Activated naive CD4-positive, alpha-beta T cell treated with anti-CD3 and anti-CD28 coated beads for 36 hours (primary cell): ENCODE measurements at regions of chr16 and their contacts with region 1.

Region 1: GRCh38 chr16:67806428-67807147 is at the starts of genes RANBP10 and TSNAXIP1:
- DNase-seq: peak; percentile 98
- H3K4me3 Mint-ChIP-seq: peak within 1 kb of the TSS; percentile 86
- H3K27ac Mint-ChIP-seq: peak within 1 kb of the TSS; percentile 81
- H3K4me1 Mint-ChIP-seq: peaks cover 36% of the 10 kb centered on the region
- H3K27me3 Mint-ChIP-seq: no peaks in the 10 kb centered on the region
- total RNA-seq, gene RANBP10: 12.4 to 16.1 TPM
- total RNA-seq, gene TSNAXIP1: 0.35 to 0.50 TPM

Region 2: GRCh38 chr16:67226804-67227557 is 579.6 kb before region 1 on chr16 and contains the start of gene TMEM208:
- CTCF ChIA-PET with region 1: no interaction called
- intact Hi-C with region 1: loop called (anchors 1 kb)
- DNase-seq: peak; percentile 99
- H3K4me3 Mint-ChIP-seq: peak within 1 kb of the TSS; percentile 100
- H3K27ac Mint-ChIP-seq: peak within 1 kb of the TSS; percentile 96
- H3K4me1 Mint-ChIP-seq: peaks cover 51% of the 10 kb centered on the region
- H3K27me3 Mint-ChIP-seq: no peaks in the 10 kb centered on the region
- total RNA-seq, gene TMEM208: 24.6 to 29.4 TPM

Region 3: GRCh38 chr16:67349172-67349571 is 457.4 kb before region 1 on chr16:
- CTCF ChIA-PET with region 1: no interaction called
- intact Hi-C with region 1: no loop called
- DNase-seq: no peak
- H3K4me3 Mint-ChIP-seq: no peak overlapping the region
- H3K27ac Mint-ChIP-seq: no peak overlapping the region
- H3K4me1 Mint-ChIP-seq: no peaks in the 10 kb centered on the region
- H3K27me3 Mint-ChIP-seq: no peaks in the 10 kb centered on the region

Region 4: GRCh38 chr16:67530013-67530939 is 276.3 kb before region 1 on chr16:
- CTCF ChIA-PET with region 1: no interaction called
- intact Hi-C with region 1: no loop called
- DNase-seq: peak; percentile 54
- H3K4me3 Mint-ChIP-seq: peak overlapping the region; percentile 68
- H3K27ac Mint-ChIP-seq: no peak overlapping the region
- H3K4me1 Mint-ChIP-seq: peaks cover 14% of the 10 kb centered on the region
- H3K27me3 Mint-ChIP-seq: peaks cover 20% of the 10 kb centered on the region

Region 5: DNA sequence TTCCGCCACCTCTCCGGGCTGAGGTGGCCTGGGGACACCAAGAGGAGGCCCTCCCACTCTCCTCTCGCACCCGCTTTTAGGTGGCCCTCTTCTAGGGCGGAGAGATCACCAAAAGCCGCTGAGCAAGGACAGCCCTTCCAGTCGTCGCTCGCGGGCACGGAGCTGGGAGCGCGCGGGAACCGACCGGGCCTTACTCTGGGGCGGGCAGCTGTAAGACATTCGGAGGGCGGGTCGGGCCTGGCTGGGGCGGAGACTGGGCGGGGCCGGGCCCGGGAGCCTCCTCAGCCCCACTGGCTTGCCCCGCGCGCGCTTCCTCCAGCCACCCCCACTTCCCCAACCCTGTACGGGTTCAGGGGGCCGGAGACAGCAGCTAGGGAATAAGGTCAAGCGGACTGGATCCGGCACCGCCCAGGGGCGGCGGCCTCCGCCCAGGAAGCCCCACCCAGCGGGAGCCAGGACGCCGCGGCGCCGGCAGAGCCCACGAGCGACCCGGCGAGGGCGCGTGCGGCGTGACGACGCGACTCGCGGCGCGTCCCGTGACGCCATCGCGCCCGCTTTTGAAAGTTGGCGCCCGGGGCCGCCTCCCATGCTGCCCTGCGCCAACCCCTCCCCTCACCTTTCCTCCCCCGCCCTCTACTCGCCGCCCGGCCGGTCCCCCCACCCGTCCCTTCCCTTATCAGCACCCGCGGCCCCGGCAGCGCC is 244.6 kb before region 1 on chr16:
- CTCF ChIA-PET with region 1: interaction called, 3 read pairs
- intact Hi-C with region 1: loop called (anchors 1 kb)
- DNase-seq: peak; percentile 98
- H3K4me3 Mint-ChIP-seq: peak overlapping the region; percentile 78
- H3K27ac Mint-ChIP-seq: peak overlapping the region; percentile 86
- H3K4me1 Mint-ChIP-seq: peaks cover 45% of the 10 kb centered on the region
- H3K27me3 Mint-ChIP-seq: no peaks in the 10 kb centered on the region

Region 6: GRCh38 chr16:67719048-67719777 is 87.4 kb before region 1 on chr16 and contains the start of gene GFOD2:
- CTCF ChIA-PET with region 1: no interaction called
- intact Hi-C with region 1: loop called (anchors 1 kb)
- DNase-seq: peak; percentile 99
- H3K4me3 Mint-ChIP-seq: peak within 1 kb of the TSS; percentile 96
- H3K27ac Mint-ChIP-seq: peak within 1 kb of the TSS; percentile 96
- H3K4me1 Mint-ChIP-seq: peaks cover 36% of the 10 kb centered on the region
- H3K27me3 Mint-ChIP-seq: no peaks in the 10 kb centered on the region
- total RNA-seq, gene GFOD2: 7.3 to 8.2 TPM

Region 7: GRCh38 chr16:67741118-67741517 is 65.5 kb before region 1 on chr16:
- CTCF ChIA-PET with region 1: no interaction called
- intact Hi-C with region 1: no loop called
- DNase-seq: no peak
- H3K4me3 Mint-ChIP-seq: no peak overlapping the region
- H3K27ac Mint-ChIP-seq: peak overlapping the region; percentile 7
- H3K4me1 Mint-ChIP-seq: no peaks in the 10 kb centered on the region
- H3K27me3 Mint-ChIP-seq: no peaks in the 10 kb centered on the region

Region 8: GRCh38 chr16:67892899-67893742 is 86.5 kb after region 1 on chr16 and contains the start of gene PSKH1:
- CTCF ChIA-PET with region 1: no interaction called
- intact Hi-C with region 1: loop called (anchors 1 kb)
- DNase-seq: peak; percentile 98
- H3K4me3 Mint-ChIP-seq: peak within 1 kb of the TSS; percentile 79
- H3K27ac Mint-ChIP-seq: peak within 1 kb of the TSS; percentile 82
- H3K4me1 Mint-ChIP-seq: peaks cover 39% of the 10 kb centered on the region
- H3K27me3 Mint-ChIP-seq: no peaks in the 10 kb centered on the region
- total RNA-seq, gene PSKH1: 7.1 to 8.0 TPM

Region 9: GRCh38 chr16:68237243-68238028 is 430.8 kb after region 1 on chr16:
- CTCF ChIA-PET with region 1: no interaction called
- intact Hi-C with region 1: loop called (anchors 10 kb)
- DNase-seq: peak; percentile 95
- H3K4me3 Mint-ChIP-seq: peak overlapping the region; percentile 93
- H3K27ac Mint-ChIP-seq: peak overlapping the region; percentile 79
- H3K4me1 Mint-ChIP-seq: peaks cover 30% of the 10 kb centered on the region
- H3K27me3 Mint-ChIP-seq: no peaks in the 10 kb centered on the region